ENCODE measurements at regions of chr6 and their contacts with region 1.

Region 1: DNA sequence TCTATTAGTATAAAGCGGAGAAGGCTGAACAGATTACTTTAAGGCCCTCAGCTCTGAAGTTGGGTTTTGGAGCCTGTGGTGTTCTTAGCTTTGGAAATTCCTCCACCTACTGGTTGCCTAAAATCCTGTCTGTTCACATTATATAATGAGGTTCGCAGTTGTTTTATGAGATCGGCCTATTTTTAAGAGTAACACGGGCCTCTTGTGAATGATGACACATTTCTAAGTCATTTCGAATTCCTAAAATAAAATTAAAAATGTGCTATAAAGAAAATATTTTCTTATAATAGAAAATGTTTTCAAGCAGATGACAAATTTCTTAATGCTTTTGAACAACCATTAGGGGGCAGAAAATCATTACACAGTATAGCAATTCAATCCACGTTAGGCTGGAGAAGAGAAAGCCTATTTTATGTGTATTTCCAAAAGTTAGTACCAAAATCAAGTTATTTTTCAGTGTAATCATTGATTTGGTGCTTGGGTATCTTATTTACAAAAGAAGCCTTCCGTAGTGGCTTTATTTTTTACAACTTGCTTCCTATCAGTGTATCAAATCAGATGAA is 15.8 kb upstream of the FAM8A1 start:
- DNase-seq: peak; percentile 49
- ATAC-seq: peak; percentile 50
- H3K4me3 ChIP-seq: no peak overlapping the region
- H3K4me3 Mint-ChIP-seq: no peak overlapping the region
- H3K27ac ChIP-seq: no peak overlapping the region
- H3K27ac Mint-ChIP-seq: no peak overlapping the region
- H3K4me1 ChIP-seq: no peaks in the 10 kb centered on the region
- H3K4me1 Mint-ChIP-seq: no peaks in the 10 kb centered on the region
- H3K27me3 ChIP-seq: peaks cover 0 to 3% (median 0%) of the 10 kb centered on the region in 4 experiments
- H3K27me3 Mint-ChIP-seq: peaks cover 7% of the 10 kb centered on the region
- CTCF ChIP-seq: peak; percentile 82

Region 2: DNA sequence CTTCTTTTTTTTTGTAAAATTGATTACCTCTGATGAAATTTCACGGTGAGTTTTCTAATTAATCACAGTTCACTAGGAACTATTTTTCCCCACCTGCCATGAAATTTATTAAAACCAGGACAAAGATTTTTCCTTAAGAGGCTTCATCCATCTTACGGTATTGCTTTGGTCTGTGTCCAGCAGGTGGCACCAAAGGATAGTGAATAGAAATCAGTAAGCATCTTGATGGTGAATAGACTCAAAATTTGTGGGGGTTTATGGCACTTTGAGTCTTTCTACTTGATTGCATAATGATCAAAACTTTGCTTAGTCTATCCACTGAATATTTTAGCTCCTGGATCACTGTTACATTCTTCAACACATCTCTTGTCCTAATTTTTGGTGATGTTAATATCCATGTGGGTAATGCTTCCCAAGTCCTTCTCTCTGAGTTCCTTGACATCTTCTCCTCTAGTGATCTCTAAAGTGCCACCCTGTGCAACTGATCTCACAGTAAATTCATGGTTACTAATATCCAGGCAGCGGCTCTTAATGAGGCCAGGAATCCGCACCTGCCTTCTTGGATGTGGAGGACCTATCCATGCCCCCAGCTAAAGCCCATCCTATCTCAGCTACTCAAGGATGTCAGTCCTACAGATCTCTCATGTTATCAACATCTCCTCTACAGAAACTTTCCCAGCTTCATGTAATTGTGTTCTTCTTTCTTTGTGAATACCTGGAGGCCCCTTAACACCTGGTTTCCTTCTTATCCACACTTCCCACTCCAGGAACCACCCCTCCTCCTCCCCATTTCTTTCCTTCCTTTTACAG is 428.0 kb before region 1 on chr6:
- CTCF ChIA-PET with region 1: no interaction called
- POLR2A ChIA-PET with region 1: no interaction called
- intact Hi-C with region 1: loop called (anchors 1 kb)
- DNase-seq: peak; percentile 70
- ATAC-seq: no peak
- H3K4me3 ChIP-seq: no peak overlapping the region
- H3K4me3 Mint-ChIP-seq: no peak overlapping the region
- H3K27ac ChIP-seq: no peak overlapping the region
- H3K27ac Mint-ChIP-seq: no peak overlapping the region
- H3K4me1 ChIP-seq: no peaks in the 10 kb centered on the region
- H3K4me1 Mint-ChIP-seq: no peaks in the 10 kb centered on the region
- H3K27me3 ChIP-seq: no peaks in the 10 kb centered on the region
- H3K27me3 Mint-ChIP-seq: peaks cover 12% of the 10 kb centered on the region
- CTCF ChIP-seq: peak; percentile 90

Region 3: GRCh38 chr6:17536586-17536985 is 47.7 kb before region 1 on chr6:
- CTCF ChIA-PET with region 1: no interaction called
- POLR2A ChIA-PET with region 1: no interaction called
- intact Hi-C with region 1: no loop called
- DNase-seq: no peak
- ATAC-seq: no peak
- H3K4me3 ChIP-seq: no peak overlapping the region
- H3K4me3 Mint-ChIP-seq: no peak overlapping the region
- H3K27ac ChIP-seq: no peak overlapping the region
- H3K27ac Mint-ChIP-seq: no peak overlapping the region
- H3K4me1 ChIP-seq: no peaks in the 10 kb centered on the region
- H3K4me1 Mint-ChIP-seq: no peaks in the 10 kb centered on the region
- H3K27me3 ChIP-seq: peaks cover 0 to 5% (median 0%) of the 10 kb centered on the region in 4 experiments
- H3K27me3 Mint-ChIP-seq: peaks cover 13% of the 10 kb centered on the region
- CTCF ChIP-seq: no peak

Region 4: GRCh38 chr6:17565399-17565798 is 18.9 kb before region 1 on chr6:
- CTCF ChIA-PET with region 1: no interaction called
- POLR2A ChIA-PET with region 1: no interaction called
- intact Hi-C with region 1: no loop called
- DNase-seq: no peak
- ATAC-seq: no peak
- H3K4me3 ChIP-seq: no peak overlapping the region
- H3K4me3 Mint-ChIP-seq: no peak overlapping the region
- H3K27ac ChIP-seq: no peak overlapping the region
- H3K27ac Mint-ChIP-seq: no peak overlapping the region
- H3K4me1 ChIP-seq: no peaks in the 10 kb centered on the region
- H3K4me1 Mint-ChIP-seq: no peaks in the 10 kb centered on the region
- H3K27me3 ChIP-seq: no peaks in the 10 kb centered on the region
- H3K27me3 Mint-ChIP-seq: peaks cover 3% of the 10 kb centered on the region
- CTCF ChIP-seq: no peak

Region 5: DNA sequence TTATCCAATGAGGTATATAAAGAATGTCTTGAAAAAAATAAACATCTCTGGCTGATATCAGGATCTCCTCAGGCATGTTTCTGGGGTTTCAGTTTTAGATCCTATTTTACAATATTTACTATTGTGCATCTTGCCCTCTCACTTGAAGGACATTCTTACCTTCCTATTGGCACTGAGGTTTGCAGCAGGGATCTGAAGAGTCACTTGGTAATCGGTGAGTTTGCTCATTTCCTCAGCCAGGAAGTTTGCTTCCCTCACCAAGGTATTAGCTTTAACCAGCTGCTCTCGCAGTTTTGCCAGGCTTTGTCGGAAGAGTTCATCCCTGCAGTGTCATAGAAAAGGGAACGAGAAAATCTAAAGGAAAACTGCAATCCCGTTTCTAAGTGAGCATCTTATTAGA is 224.3 kb after region 1 on chr6:
- CTCF ChIA-PET with region 1: interaction called, 38 read pairs
- POLR2A ChIA-PET with region 1: no interaction called
- intact Hi-C with region 1: loop called (anchors 1 kb)
- DNase-seq: no peak
- ATAC-seq: no peak
- H3K4me3 ChIP-seq: no peak overlapping the region
- H3K4me3 Mint-ChIP-seq: no peak overlapping the region
- H3K27ac ChIP-seq: no peak overlapping the region
- H3K27ac Mint-ChIP-seq: no peak overlapping the region
- H3K4me1 ChIP-seq: no peaks in the 10 kb centered on the region
- H3K4me1 Mint-ChIP-seq: no peaks in the 10 kb centered on the region
- H3K27me3 ChIP-seq: no peaks in the 10 kb centered on the region
- H3K27me3 Mint-ChIP-seq: no peaks in the 10 kb centered on the region
- CTCF ChIP-seq: no peak

Region 6: DNA sequence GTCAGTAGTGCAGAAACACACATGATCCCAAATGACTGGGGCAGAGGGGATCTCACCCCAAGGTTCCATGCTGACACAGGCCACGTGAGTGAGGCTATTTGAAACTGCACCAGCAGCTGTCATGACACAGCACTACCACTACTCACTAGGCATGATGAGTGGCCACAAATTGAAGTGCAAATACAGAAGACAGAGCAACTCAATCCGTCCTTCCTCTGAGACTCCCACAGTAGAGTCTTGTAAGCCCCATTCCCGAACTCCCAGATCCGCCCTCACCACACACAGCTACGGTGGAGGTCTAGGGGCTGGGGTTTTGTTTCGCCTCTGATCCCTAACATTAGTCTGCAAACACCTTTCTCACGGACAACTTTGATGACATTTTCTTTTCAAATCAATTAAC is 235.7 kb after region 1 on chr6:
- CTCF ChIA-PET with region 1: interaction called, 12 read pairs
- POLR2A ChIA-PET with region 1: no interaction called
- intact Hi-C with region 1: loop called (anchors 1 kb)
- DNase-seq: no peak
- ATAC-seq: no peak
- H3K4me3 ChIP-seq: no peak overlapping the region
- H3K4me3 Mint-ChIP-seq: no peak overlapping the region
- H3K27ac ChIP-seq: no peak overlapping the region
- H3K27ac Mint-ChIP-seq: no peak overlapping the region
- H3K4me1 ChIP-seq: no peaks in the 10 kb centered on the region
- H3K4me1 Mint-ChIP-seq: no peaks in the 10 kb centered on the region
- H3K27me3 ChIP-seq: no peaks in the 10 kb centered on the region
- H3K27me3 Mint-ChIP-seq: no peaks in the 10 kb centered on the region
- CTCF ChIP-seq: no peak

Measured in B cell (primary cell).